WTC11 (cell line): ENCODE measurements at regions of chr12 and their contacts with region 1.

Region 1: GRCh38 chr12:20798561-20798960 is 11.9 kb upstream of the SLCO1B3 start:
- DNase-seq: no peak
- ATAC-seq: peak; percentile 80
- H3K4me3 Mint-ChIP-seq: no peak overlapping the region
- H3K27ac Mint-ChIP-seq: no peak overlapping the region
- H3K4me1 Mint-ChIP-seq: no peaks in the 10 kb centered on the region; the same call in 1 of the 2 replicates
- H3K27me3 Mint-ChIP-seq: no peaks in the 10 kb centered on the region
- CTCF ChIP-seq: peak; percentile 33; the same call in 1 of the 2 replicates

Region 2: DNA sequence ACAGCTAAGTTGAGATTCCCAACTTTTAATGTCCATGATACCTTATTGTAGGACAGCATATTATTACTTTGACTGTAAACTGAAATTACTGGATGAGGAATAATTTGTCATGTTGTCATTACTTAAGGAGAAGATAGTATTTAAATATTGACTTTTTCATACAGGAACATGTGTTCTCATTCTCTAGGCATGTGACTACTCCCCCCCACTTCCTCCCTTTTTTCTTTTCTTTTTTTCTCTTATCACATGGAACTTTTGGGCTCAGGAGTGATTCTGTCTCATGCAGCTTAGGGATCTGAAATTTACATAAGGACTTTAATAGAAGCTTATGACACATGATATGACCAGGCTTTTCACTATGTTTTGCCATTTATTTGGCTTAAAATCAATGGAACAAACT is 231.1 kb before region 1 on chr12:
- CTCF ChIA-PET with region 1: no interaction called
- POLR2A ChIA-PET with region 1: no interaction called
- DNase-seq: no peak
- ATAC-seq: no peak
- H3K4me3 Mint-ChIP-seq: no peak overlapping the region
- H3K27ac Mint-ChIP-seq: no peak overlapping the region
- H3K4me1 Mint-ChIP-seq: no peaks in the 10 kb centered on the region
- H3K27me3 Mint-ChIP-seq: no peaks in the 10 kb centered on the region
- CTCF ChIP-seq: no peak

Region 3: DNA sequence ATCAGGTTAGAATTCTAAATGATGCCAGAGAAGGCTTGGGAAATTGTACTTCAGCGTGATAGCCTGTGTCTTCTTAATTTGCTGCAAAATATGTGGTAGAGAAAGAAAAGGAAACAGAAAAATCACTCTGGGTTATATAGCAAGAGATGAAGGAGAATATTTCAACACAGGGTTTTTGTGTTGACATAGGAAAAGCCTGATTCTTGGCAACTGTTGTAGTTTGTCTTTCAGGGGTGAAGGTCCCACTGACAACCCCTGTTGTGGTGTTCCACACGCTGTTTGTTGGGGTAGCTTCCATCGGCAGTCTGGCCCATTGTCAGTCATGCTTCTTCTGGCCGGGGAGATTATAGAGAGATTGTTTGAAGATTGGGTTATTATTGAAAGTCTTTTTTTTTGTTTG is 117.2 kb before region 1 on chr12:
- CTCF ChIA-PET with region 1: interaction called, 12 read pairs
- POLR2A ChIA-PET with region 1: no interaction called
- DNase-seq: no peak
- ATAC-seq: no peak
- H3K4me3 Mint-ChIP-seq: no peak overlapping the region
- H3K27ac Mint-ChIP-seq: no peak overlapping the region
- H3K4me1 Mint-ChIP-seq: no peaks in the 10 kb centered on the region
- H3K27me3 Mint-ChIP-seq: no peaks in the 10 kb centered on the region; the same call in 1 of the 2 replicates
- CTCF ChIP-seq: no peak

Region 4: DNA sequence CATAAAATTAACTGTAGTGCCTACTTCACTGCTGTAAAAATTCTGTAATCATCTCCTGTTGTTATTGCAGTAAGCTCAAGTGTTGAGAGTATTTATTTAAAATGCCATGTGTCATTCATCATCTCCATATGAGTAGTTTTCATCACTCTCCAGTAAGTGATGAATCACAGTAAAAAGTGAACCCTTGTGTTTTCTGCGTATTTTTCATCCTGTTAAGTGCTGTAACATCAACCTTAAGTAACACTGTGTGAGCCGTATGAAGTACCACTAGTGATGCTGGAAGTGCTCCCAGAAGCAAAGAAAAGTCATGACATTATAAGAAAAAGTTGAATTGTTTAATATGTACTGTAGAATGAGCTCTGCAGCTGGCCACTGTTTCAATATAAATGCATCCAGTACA is 67.3 kb after region 1 on chr12:
- CTCF ChIA-PET with region 1: no interaction called
- POLR2A ChIA-PET with region 1: no interaction called
- DNase-seq: no peak
- ATAC-seq: no peak
- H3K4me3 Mint-ChIP-seq: no peak overlapping the region
- H3K27ac Mint-ChIP-seq: no peak overlapping the region
- H3K4me1 Mint-ChIP-seq: no peaks in the 10 kb centered on the region
- H3K27me3 Mint-ChIP-seq: no peaks in the 10 kb centered on the region
- CTCF ChIP-seq: no peak